Right ventricle myocardium inferior (tissue), 1 donor: ENCODE measurements at regions of chr1 and their contacts with region 1.

Region 1: GRCh38 chr1:234309598-234310459 is 63.4 kb upstream of the COA6 start:
- DNase-seq: no peak
- ATAC-seq: peak; percentile 56

Region 2: DNA sequence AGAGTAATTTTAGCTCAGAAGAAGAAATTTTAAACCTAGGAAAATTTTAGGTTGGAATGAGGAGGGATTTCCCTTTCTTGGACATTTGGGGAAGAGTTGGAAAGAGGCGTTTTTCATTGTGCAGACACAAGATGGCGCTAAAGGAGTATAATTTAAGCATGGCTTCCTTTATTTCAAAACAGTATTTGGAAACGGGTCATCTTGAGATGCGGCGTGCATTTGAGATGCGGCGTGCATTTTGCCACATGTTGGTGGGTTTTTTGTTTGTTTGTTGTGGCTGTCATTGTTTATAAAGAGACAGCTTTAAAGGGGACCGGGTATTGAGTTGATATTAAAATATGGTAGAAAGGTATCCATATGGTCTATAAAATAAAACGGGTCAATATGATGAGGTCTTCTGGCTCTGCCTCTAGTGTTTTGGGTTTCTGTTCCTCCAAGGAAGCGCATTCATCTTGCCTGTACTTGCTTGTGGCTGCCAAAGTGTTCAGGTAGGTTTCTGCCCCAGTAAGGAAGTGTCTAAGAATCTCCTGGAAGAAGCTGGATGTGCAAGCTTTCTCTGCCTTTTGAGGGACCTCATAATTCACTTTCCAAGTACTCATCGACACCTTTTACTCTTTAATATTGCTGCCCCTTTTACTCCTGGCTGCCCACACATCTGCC is 195.1 kb before region 1 on chr1:
- intact Hi-C with region 1: loop called (anchors 5 kb)
- DNase-seq: no peak
- ATAC-seq: no peak

Region 3: GRCh38 chr1:234154320-234155251 is 155.2 kb before region 1 on chr1:
- intact Hi-C with region 1: loop called (anchors 2 kb)
- DNase-seq: no peak
- ATAC-seq: no peak